ENCODE measurements at regions of chr7 and their contacts with region 1.

Region 1: DNA sequence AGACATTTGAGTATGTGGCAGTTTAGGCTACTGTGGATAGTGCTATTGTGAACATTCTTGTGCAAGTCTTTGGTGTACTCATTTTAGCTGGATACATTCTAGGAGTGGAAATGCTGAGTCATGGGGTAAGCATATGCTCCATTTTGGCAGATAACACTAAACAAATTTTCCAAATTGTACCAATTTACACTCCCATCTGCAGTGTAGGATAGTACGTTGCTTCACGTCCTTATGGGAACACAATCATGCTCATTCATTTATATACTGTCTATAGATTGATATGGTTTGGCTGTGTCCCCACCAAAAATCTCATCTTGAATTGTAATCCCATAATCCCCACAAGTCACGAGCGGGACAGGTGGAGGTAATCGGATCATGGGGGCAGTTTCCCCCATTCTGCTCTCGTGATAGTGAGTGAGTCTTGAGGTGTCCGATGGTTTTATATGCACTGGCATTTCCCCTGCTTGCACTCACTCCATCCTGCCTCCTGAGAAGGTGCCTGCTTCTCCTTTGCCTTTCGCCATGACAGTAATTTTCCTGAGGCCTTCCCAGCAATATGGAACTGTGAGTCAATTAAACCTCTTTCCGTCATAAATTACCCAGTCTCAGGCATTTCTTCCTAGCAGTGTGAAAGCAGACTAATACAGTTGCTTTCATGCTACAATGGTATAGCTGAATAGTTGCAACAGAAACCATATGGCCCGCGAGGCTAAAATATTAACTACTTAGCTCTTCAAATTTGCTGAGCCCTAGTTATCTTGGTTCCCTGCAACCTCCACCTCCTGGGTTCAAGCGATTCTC is 25.6 kb downstream of the RNF216 start:
- DNase-seq: no peak

Region 2: GRCh38 chr7:5354460-5355232 is 401.3 kb before region 1 on chr7:
- intact Hi-C with region 1: no loop called
- DNase-seq: no peak

Region 3: DNA sequence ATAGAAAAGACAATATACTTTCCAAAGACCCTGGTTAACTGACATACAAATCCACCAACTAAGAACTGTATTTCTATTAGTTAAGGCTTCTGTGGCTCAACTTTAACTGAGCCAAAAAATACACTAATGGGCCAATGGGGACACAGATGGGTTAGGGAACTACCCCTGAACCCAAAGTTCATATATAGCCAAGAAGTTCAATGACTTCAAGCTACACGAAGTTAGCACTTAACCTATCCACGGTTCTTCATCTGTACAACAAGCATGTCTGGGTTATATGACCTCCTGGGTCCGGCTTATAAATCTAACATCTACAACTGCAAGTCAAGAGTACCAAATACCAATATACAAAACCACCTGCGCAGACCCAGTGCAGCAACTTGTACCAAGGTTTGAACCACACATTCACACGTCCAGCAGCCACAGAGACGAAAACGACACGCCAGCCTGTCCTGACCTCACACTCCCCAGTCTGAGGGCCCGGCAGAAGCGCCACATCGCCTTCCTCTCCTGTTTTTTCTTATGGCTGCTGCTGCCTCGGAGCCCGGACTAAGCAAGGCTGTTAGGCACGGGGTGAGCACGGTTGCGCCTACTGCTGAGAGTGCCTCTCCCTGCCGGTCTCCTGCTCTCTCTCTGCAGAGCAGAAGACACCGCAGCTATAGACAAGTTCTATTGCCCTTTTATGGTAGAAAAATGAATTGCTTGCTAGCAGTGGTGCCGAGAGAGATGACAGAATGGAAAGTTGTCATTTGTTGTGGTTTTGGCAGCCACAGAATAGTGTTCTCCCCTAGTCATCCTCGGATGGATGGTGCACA is 60.8 kb before region 1 on chr7:
- intact Hi-C with region 1: no loop called
- DNase-seq: peak; percentile 87

Region 4: GRCh38 chr7:5822742-5823503 is 67.0 kb after region 1 on chr7:
- intact Hi-C with region 1: loop called in 1 of 2 experiments (anchors 2 kb)
- DNase-seq: peak; percentile 98

Region 5: DNA sequence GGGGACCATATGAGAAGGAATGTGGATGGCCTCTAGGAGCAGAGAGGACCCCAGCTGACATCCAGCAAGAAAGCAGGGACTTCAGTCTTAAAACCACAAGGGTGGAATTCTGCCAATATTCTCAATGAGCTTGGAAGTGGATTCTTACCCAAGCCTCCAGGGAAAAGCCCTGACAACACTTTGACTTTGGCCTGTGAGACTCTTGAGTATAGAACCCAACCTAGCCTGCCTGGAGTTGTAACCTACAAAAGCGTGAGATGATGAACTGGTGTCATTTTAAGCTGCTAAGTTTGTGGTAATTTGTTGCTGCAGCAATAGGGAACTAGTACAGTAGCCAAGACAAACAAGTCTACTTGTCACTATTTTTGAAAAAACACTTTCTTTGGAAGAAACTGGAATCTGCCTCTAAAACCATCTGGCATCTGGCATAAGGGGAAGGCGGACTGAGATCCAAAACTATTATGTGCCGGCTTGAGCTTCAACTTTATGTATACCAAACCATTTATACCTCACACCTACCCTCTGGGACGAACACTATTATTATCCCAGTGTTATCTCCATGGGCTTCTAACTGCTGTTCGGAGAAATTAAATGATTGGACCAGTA is 1509.3 kb after region 1 on chr7:
- intact Hi-C with region 1: no loop called
- DNase-seq: no peak

Measured in posterior vena cava (tissue), 2 donors.